Heart right ventricle (tissue), 16 donors: ENCODE measurements at regions of chr1 and their contacts with region 1.

Region 1: DNA sequence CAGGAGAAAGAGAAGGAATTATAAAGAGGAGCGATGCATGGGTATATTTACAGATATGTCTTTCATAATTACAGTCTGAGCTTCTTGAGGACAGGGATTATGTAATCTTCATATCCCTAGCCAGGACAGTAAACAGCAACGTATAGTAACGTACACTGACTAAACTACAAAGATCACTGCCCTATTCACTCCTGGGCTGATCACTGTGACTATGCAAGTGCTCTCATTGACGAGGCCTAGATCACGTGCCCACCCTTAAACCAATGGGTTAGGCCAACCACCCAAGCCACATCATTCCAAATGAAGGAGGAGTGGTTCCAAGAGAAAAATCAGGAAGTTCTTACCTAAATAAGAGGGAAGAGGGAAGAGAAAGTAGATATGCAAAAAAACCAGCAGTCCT is 18.5 kb downstream of the PIK3R3 start:
- DNase-seq: no peak
- ATAC-seq: peak in 1 of 8 donors; percentile 33
- H3K4me3 ChIP-seq: no peak overlapping the region
- H3K27ac ChIP-seq: no peak overlapping the region
- H3K4me1 ChIP-seq: peaks cover 0 to 78% (median 50%) of the 10 kb centered on the region in 9 donors
- H3K27me3 ChIP-seq: no peaks in the 10 kb centered on the region
- CTCF ChIP-seq: no peak

Region 2: DNA sequence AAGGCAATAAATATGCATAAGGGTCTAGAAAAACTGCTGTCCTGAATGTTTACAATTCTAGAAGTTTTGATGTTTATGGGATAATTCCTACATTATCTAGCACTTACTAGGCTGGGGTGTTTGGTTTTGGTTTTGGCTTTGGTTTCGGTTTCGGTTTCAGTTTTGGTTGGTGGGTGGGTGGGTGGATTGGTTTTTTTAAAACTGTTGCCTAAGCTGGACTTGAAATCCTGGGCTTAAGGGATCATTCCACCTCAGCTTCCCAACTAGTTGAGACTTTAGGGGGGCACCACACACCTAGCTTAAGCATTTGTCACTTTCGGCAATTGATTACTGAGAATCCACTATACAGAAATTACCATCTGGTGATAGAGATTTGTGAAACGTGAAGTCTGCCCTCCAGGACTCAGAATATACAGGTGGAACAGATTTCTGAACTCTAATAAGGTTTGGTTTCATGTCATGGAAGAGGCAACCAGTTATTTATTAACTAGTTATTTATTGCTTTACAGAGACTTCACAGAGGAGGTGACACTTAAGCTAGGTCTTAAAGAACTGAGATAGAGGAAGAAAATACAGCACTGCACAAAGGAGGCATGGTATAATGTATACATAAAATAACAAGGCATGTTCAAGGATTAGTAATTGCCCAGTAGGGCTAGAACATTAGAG is 51.2 kb before region 1 on chr1:
- intact Hi-C with region 1: loop called in 1 of 10 experiments (anchors 10 kb)
- DNase-seq: peak in 1 of 2 donors; percentile 16
- ATAC-seq: peak in 2 of 8 donors; percentile 35 to 48
- H3K4me3 ChIP-seq: no peak overlapping the region
- H3K27ac ChIP-seq: peak overlapping the region in 3 of 10 donors; percentile 29 to 57 (median 31)
- H3K4me1 ChIP-seq: peaks cover 0 to 32% (median 0%) of the 10 kb centered on the region in 9 donors
- H3K27me3 ChIP-seq: no peaks in the 10 kb centered on the region
- CTCF ChIP-seq: no peak

Region 3: GRCh38 chr1:46152016-46152415 is 38.1 kb after region 1 on chr1:
- intact Hi-C with region 1: no loop called
- DNase-seq: no peak
- ATAC-seq: peak in 1 of 8 donors; percentile 67
- H3K4me3 ChIP-seq: no peak overlapping the region
- H3K27ac ChIP-seq: no peak overlapping the region
- H3K4me1 ChIP-seq: peaks cover 0 to 14% (median 3%) of the 10 kb centered on the region in 9 donors
- H3K27me3 ChIP-seq: no peaks in the 10 kb centered on the region
- CTCF ChIP-seq: no peak